ENCODE measurements at regions of chr7 and their contacts with region 1.

Region 1: DNA sequence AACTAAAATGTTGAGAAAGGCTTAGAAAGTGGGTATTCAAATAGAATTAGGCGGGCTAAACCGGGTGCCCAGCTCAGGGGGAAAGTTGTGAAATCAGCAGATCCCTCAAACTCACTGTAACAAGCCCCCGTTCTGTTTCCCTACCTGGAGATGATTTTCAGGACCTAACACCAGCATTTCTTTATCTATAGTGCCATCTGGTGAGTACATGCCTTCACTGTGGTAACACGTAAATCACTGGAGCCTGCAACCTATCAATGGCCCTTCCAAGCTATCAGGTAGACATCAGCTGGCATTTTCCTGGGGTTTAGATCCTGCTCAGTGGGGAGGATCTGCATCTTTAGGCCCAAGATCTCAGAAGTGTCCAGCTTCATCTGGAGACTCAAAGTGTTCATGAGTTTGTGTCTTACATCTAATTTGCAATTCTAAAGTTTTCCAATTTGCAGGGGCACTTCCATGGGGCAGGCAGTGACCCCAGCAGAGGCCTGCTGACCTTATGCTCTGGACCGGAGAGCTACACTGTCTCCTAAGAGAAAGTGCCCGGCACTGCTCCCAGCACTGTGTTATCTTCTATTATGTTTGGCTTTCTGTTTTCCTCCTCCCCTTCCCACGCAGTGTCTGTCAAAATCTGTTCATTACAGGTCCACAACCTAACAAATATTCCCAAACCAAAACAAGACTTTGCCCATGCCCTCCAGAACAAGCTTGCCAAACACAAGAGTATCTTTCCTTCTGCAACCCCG is 132.5 kb downstream of the LSM5 start:
- DNase-seq: peak; percentile 42 to 78 (median 72)
- H3K4me3 ChIP-seq: no peak overlapping the region
- H3K27ac ChIP-seq: no peak overlapping the region
- H3K4me1 ChIP-seq: no peaks in the 10 kb centered on the region
- H3K27me3 ChIP-seq: peaks cover 0 to 9% (median 3%) of the 10 kb centered on the region in 5 experiments

Region 2: DNA sequence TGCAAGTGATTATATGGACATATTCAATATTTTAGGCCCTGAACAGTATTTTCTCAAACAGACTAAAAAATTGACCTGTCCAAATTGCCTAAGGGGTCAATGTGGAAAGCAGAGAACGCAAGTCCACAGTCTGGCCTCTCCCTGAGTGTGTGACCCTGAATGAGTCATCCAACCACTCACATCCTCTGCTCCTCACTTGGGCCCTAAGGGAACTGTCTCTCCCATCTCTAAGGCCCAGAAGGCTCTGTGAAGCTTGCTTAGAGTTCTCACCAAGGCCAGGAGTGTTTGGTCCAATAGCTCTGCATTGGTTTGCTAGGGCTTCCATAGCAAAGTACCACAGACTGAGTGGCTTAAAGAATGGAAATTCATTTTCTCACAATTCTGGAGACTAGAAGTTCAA is 22.6 kb before region 1 on chr7:
- CTCF ChIA-PET with region 1: interaction called, 18 read pairs
- POLR2A ChIA-PET with region 1: no interaction called
- DNase-seq: no peak
- H3K4me3 ChIP-seq: no peak overlapping the region
- H3K27ac ChIP-seq: no peak overlapping the region
- H3K4me1 ChIP-seq: no peaks in the 10 kb centered on the region
- H3K27me3 ChIP-seq: peaks cover 0 to under 1% (median 0%) of the 10 kb centered on the region in 5 experiments

Region 3: DNA sequence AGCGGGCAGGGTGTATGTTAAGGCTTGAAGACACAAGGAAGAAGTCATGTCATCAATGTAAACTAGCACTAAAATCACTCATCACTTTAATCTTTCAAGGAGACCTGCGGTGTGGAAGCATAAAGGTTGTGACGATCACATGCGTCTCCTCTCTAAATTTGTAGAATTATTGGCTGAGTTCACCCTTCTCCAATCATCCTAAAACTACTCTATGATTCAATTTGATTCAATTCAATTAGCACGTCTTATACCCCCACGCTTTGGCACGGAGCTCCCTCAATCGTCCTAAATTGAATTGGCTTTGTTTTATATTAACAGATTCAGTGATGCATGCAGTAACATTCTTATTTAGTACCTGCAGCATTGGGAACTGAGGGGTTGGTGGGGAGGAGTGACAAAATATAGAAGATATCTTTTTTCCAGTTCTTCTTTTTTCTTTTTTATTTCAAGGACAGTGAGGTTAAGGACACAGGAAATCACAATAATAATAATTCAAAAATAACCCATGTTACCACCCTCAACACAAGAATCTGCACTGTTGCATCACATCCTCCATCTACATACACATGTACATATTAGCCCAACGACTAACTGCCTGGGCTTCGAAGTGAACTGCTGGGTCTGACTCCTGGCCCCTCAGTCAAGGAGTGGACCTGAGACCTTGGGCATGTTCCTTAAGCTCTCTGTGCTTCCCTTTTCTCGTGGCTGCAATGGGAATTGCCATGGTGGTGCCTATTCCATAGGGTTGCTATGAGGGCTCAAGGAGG is 45.9 kb after region 1 on chr7:
- CTCF ChIA-PET with region 1: no interaction called
- POLR2A ChIA-PET with region 1: no interaction called
- DNase-seq: no peak
- H3K4me3 ChIP-seq: no peak overlapping the region
- H3K27ac ChIP-seq: no peak overlapping the region
- H3K4me1 ChIP-seq: no peaks in the 10 kb centered on the region
- H3K27me3 ChIP-seq: peaks cover 0 to 5% (median 0%) of the 10 kb centered on the region in 5 experiments